CD4-positive, alpha-beta memory T cell (primary cell): ENCODE measurements at regions of chr3 and their contacts with region 1.

Region 1: GRCh38 chr3:27467545-27467944 is 16.6 kb downstream of the SLC4A7 start:
- DNase-seq: peak in 4 of 5 donors; percentile 41 to 49 (median 42)
- H3K4me3 ChIP-seq: no peak overlapping the region
- H3K4me3 Mint-ChIP-seq: peak overlapping the region in 3 of 8 donors; percentile 4 to 44 (median 39)
- H3K27ac ChIP-seq: no peak overlapping the region
- H3K27ac Mint-ChIP-seq: peak overlapping the region in 5 of 7 donors; percentile 6 to 63 (median 27)
- H3K4me1 ChIP-seq: peaks cover 30% of the 10 kb centered on the region
- H3K4me1 Mint-ChIP-seq: peaks cover 25 to 57% (median 35%) of the 10 kb centered on the region in 4 donors
- H3K27me3 ChIP-seq: no peaks in the 10 kb centered on the region
- H3K27me3 Mint-ChIP-seq: no peaks in the 10 kb centered on the region

Region 2: GRCh38 chr3:27134165-27134796 is 333.3 kb before region 1 on chr3:
- CTCF ChIA-PET with region 1: interaction called, 7 read pairs
- POLR2A ChIA-PET with region 1: no interaction called
- intact Hi-C with region 1: loop called (anchors 1 kb)
- DNase-seq: peak; percentile 41 to 53 (median 49)
- H3K4me3 ChIP-seq: no peak overlapping the region
- H3K4me3 Mint-ChIP-seq: no peak overlapping the region
- H3K27ac ChIP-seq: no peak overlapping the region
- H3K27ac Mint-ChIP-seq: no peak overlapping the region
- H3K4me1 ChIP-seq: no peaks in the 10 kb centered on the region
- H3K4me1 Mint-ChIP-seq: no peaks in the 10 kb centered on the region
- H3K27me3 ChIP-seq: no peaks in the 10 kb centered on the region
- H3K27me3 Mint-ChIP-seq: peaks cover 0 to 2% of the 10 kb centered on the region in 2 donors

Region 3: DNA sequence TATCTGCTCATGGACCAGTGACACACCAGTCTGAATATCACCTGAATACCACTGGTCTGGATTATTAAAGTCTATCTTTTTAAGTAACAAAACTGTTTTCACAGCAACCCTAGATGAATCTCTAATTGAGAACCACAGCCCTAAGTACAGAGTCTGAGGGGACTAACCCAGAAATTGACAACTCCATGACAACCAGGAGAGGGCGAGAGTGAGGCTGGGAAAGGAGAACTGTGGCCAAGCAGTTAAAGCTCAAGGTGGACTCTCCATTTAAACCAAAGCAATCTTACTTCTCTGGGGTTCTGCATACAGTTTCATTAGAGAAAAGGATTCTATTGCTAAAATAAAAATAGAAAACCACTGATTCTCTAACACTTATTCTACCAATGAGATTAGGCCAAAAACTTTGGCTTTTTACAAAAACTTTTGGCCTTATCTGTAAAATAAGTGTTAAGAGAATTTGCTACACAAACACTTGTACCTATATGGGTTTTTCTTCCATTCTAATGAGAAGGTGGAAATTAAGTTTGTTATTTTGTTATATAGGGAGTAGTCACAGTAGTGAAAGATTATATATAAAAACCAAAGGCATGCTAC is 109.8 kb before region 1 on chr3:
- CTCF ChIA-PET with region 1: interaction called, 20 read pairs
- POLR2A ChIA-PET with region 1: no interaction called
- intact Hi-C with region 1: loop called (anchors 1 kb)
- DNase-seq: peak; percentile 47 to 59 (median 53)
- H3K4me3 ChIP-seq: no peak overlapping the region
- H3K4me3 Mint-ChIP-seq: peak overlapping the region in 6 of 8 donors; percentile 14 to 74 (median 30)
- H3K27ac ChIP-seq: no peak overlapping the region
- H3K27ac Mint-ChIP-seq: peak overlapping the region in 1 of 7 donors; percentile 58
- H3K4me1 ChIP-seq: peaks cover 34% of the 10 kb centered on the region
- H3K4me1 Mint-ChIP-seq: peaks cover 28 to 60% (median 40%) of the 10 kb centered on the region in 4 donors
- H3K27me3 ChIP-seq: no peaks in the 10 kb centered on the region
- H3K27me3 Mint-ChIP-seq: no peaks in the 10 kb centered on the region

Region 4: GRCh38 chr3:27428446-27428845 is 39.1 kb before region 1 on chr3:
- CTCF ChIA-PET with region 1: interaction called, 11 read pairs
- POLR2A ChIA-PET with region 1: no interaction called
- intact Hi-C with region 1: no loop called
- DNase-seq: no peak
- H3K4me3 ChIP-seq: no peak overlapping the region
- H3K4me3 Mint-ChIP-seq: no peak overlapping the region
- H3K27ac ChIP-seq: no peak overlapping the region
- H3K27ac Mint-ChIP-seq: no peak overlapping the region
- H3K4me1 ChIP-seq: no peaks in the 10 kb centered on the region
- H3K4me1 Mint-ChIP-seq: peaks cover 2 to 7% (median 4%) of the 10 kb centered on the region in 4 donors
- H3K27me3 ChIP-seq: no peaks in the 10 kb centered on the region
- H3K27me3 Mint-ChIP-seq: no peaks in the 10 kb centered on the region

Region 5: DNA sequence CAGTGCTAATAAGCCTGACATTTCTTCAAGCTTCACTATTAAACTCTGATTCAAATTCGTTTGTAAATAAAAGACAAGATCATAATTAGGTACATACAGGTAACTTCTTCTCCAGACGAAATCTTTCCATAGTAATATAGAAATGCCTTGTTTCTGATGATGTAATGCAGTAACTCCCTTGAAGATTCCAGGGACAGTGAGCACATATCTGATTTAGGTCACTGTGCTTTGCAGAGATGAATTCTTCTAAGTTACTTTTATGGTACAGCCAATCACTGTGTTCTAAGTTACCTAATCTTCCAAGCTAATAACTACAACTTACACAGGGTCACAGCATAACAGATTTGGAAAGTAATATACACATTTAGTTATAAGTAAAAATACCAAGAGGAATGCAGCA is 11.0 kb before region 1 on chr3:
- CTCF ChIA-PET with region 1: interaction called, 20 read pairs
- POLR2A ChIA-PET with region 1: no interaction called
- intact Hi-C with region 1: no loop called
- DNase-seq: no peak
- H3K4me3 ChIP-seq: no peak overlapping the region
- H3K4me3 Mint-ChIP-seq: peak overlapping the region in 2 of 8 donors; percentile 12 to 47
- H3K27ac ChIP-seq: no peak overlapping the region
- H3K27ac Mint-ChIP-seq: peak overlapping the region in 1 of 7 donors; percentile 27
- H3K4me1 ChIP-seq: peaks cover 42% of the 10 kb centered on the region
- H3K4me1 Mint-ChIP-seq: peaks cover 43 to 79% (median 60%) of the 10 kb centered on the region in 4 donors
- H3K27me3 ChIP-seq: no peaks in the 10 kb centered on the region
- H3K27me3 Mint-ChIP-seq: no peaks in the 10 kb centered on the region

Region 6: DNA sequence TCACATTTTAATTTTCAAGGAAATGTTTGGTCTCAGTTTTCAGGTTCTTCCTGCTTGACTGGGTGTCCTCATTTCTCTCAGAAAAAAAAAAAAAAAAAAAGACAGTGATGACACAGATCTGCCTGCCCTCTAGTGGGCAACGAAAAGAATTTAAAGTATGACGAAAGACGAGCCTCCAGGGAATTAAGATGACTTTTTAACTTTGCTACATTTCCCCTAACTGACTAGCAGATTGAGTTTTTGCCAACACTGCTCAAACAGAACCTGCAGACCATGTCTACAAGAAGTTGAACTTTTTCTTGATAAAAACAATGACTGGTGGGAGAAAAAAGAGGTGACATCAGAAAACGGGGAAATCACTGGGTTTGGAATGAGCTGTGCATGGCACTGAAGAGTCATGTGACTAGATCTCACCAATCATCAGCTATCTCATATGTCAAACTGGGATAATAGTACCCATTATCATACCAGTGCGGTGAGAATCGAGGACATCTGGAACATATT is 213.8 kb after region 1 on chr3:
- CTCF ChIA-PET with region 1: interaction called, 32 read pairs
- POLR2A ChIA-PET with region 1: no interaction called
- intact Hi-C with region 1: no loop called
- DNase-seq: peak; percentile 31 to 73 (median 69)
- H3K4me3 ChIP-seq: no peak overlapping the region
- H3K4me3 Mint-ChIP-seq: peak overlapping the region; percentile 17 to 78 (median 71)
- H3K27ac ChIP-seq: no peak overlapping the region
- H3K27ac Mint-ChIP-seq: peak overlapping the region; percentile 2 to 77 (median 29)
- H3K4me1 ChIP-seq: peaks cover 12% of the 10 kb centered on the region
- H3K4me1 Mint-ChIP-seq: peaks cover 5 to 19% (median 14%) of the 10 kb centered on the region in 4 donors
- H3K27me3 ChIP-seq: no peaks in the 10 kb centered on the region
- H3K27me3 Mint-ChIP-seq: peaks cover 3 to 6% of the 10 kb centered on the region in 2 donors